ENCODE measurements at regions of chr10 and their contacts with region 1.

Region 1: DNA sequence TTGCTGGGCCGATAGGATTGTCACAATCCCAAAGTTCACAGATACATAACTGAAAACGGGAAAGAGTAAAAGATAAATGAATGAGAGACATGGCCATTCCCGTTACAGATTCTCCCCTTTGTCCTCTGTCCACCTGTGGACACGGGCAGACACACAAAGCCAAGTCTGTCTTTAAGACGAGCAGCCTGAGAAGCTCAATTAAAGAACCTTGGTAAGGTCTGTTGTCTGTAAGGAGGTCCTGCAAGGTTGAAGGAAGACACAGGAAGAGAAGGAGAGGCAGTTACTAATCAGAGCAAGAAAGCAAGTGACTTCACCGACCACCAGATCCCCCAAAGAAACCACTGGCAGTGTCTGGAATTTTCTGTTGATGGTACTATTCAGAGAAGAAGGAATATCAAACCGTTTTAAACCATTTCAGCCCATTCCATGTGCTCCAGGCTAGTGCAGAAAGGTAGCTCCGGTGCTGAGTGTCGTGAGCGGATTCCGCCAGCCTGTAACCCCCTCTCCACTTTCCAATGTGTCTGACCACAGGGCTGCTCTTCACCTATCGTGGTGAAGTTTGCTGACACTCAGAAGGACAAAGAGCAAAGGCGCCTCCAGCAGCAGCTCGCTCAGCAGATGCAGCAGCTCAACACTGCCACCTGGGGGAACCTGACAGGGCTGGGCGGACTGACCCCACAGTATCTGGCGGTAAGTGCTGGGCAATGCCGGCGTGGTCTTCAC is 252.6 kb downstream of the CELF2 start:
- DNase-seq: peak; percentile 71
- CTCF ChIP-seq: peak; percentile 93

Region 2: GRCh38 chr10:10758306-10758705 is 512.0 kb before region 1 on chr10:
- CTCF ChIA-PET with region 1: no interaction called
- POLR2A ChIA-PET with region 1: no interaction called
- DNase-seq: no peak
- CTCF ChIP-seq: no peak

Region 3: DNA sequence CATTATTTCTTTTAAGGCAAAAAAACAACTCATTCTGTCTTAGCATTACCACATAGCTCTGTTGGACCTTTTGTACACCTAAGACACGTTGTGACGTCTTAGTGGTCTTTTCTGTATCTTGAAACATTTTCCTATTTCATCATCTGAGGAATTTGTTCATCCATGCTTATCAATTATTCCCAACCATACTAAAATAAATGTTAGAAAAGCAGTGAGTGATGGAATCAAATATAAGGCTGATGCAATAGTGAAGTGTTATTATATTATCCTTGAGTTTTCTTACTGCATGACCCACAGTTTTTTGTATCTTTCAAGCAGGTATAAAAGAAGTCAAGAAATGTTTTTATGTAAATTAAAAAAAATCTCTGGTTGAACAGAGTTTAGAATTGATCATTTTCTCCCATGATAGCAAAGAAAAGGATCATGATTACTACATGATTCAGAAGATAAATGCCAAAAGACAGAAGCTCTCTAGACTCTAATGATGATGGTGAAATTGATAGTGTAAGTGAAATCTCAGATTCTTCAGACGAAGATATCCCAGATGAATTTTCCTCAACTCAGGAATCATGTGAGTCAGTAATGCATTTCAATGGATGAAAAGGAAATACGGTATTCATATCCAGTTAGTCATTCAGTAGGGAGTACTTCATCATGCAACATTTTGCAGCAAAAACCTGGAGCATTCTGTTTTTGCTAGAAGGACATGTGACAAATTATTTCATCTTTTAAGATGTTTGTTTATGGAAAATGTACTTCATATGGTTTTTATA is 201.2 kb before region 1 on chr10:
- CTCF ChIA-PET with region 1: no interaction called
- POLR2A ChIA-PET with region 1: no interaction called
- DNase-seq: no peak
- CTCF ChIP-seq: no peak

Region 4: GRCh38 chr10:11113156-11113555 is 157.1 kb before region 1 on chr10:
- CTCF ChIA-PET with region 1: interaction called, 56 read pairs
- POLR2A ChIA-PET with region 1: no interaction called
- DNase-seq: peak; percentile 40
- CTCF ChIP-seq: peak; percentile 35

Region 5: DNA sequence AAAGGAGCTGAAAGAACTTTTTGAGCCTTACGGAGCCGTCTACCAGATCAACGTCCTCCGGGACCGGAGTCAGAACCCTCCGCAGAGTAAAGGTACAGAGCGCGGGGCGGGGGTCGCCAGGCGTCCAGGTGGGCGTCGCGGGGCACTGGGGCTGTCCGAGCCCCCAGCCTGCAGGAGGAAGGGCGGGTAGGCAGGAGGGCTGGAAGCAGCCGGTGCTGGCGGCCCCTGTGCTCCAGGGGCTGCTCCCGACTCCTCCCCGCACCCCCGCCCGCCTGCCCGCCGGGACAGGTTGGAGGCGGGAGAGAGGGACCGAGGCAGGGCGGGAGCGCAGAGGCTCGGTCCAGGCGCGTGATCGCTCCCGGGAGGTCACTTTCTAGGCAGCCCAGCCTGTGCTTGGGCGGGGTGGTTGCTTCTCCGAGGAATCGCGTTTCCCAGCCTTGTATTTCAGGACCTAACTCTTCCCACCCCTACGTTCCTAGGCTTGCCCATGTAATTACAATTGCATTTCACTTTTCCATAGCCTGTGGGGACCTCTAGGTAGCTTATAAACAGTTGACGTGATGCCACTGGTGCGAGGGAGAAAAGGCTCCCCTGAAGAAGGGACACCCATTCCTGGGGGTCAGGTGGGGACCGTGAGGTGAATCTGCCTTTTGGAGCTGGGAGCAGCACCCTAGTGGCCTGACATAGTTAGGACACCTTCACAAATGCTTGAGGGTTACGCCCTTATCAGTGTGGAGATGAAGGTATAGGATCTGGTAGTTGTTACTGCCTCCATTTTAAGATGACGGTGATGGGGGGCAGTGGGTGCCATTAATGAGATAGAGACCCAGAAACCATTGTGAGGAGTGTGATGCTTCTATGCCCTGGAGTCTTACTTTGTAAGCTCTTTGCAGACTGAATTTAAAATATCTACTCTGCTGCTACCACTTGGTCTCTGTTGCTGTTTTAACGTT is 104.4 kb before region 1 on chr10:
- CTCF ChIA-PET with region 1: interaction called, 24 read pairs
- POLR2A ChIA-PET with region 1: interaction called, 3 read pairs
- DNase-seq: peak; percentile 72
- CTCF ChIP-seq: peak; percentile 56

Region 6: DNA sequence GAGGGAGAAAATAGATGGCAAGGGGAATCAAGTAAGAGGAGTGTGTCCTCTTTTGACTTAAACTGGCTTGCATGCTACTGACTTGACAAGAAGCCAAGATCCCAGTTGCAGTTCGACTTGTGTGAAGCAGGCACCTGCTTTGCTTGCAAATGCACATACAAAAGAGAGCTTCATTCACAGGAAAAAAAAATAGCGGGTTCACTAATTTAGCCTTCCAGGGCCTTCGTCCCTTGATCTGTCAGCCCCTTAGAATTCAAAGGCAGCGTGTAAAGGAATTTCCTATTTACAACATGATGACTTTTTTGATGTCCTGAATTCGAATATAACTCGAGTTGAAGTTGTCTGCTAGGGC is 60.5 kb before region 1 on chr10:
- CTCF ChIA-PET with region 1: interaction called, 13 read pairs
- POLR2A ChIA-PET with region 1: no interaction called
- DNase-seq: no peak
- CTCF ChIP-seq: no peak

Region 7: DNA sequence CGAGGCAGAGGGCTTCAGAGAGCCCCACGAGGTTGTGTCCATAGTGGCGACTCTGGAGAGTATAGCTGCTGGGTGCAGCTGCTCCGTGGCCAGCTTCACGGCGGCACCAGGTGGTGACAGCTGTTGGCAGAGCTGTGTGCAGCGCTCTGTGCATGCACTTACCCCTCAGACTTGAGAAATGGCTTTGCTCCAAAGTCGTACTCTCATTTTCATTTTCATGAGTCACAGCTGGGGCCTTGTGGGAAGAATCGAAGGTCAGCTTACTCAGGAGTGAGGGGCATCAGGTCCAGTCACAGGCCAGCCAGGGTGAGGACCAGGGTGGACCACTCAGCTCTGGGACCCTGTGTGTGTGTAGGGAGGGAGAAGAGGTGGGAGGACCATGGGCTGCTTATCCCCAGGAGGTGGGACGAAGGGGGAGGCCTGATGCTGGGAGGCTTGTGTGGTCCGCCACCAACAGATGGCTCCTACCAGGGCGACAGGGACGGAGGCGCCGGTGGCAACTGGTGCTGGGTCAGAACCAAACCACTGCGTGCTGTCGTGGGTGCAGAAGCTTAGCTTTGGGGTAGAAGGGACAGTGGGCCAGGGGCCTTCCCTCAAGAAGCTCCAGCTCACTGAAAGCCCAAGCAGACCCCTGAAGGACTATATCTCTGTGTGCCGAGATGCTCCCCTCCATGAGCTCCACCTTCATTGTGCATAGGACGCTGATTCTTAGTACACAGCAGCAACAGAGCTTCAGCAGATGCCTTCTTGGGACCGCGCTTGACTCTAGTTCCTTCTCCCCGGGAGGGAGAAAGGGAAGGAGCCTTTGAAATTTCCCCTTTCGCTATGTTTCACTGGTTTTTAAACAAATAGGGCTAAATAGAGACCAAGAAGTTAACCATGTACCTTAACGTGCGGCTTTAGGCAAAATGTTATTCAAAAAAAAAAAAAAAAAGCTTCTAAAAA is 27.6 kb before region 1 on chr10:
- CTCF ChIA-PET with region 1: interaction called, 63 read pairs
- POLR2A ChIA-PET with region 1: interaction called, 6 read pairs
- DNase-seq: peak; percentile 66
- CTCF ChIP-seq: peak; percentile 21

Region 8: DNA sequence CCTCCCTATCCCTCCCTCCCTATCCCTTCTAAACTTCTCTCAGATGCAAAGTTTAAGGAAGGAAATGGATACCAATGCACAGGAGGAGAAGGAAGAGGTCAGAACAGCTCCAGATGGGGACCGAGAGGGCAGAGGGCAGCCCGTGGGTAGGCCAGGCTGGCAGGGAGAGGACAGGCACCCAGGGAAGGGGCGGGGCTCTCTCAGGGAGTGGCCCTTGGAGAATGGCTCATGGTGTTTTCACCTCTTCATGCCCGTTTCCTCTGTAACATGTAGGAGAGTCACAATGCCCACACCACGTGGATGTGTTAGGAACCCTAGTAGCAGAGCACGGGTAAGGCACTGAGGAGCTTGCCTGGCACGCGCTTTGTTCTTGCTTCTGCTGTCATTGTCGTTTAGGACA is 11.9 kb after region 1 on chr10:
- CTCF ChIA-PET with region 1: interaction called, 16 read pairs
- POLR2A ChIA-PET with region 1: no interaction called
- DNase-seq: no peak
- CTCF ChIP-seq: no peak

Measured in GM10248 (cell line).